MCF 10A (cell line): ENCODE measurements at regions of chr22 and their contacts with region 1.

Region 1: GRCh38 chr22:50326959-50327710 is at the start of gene DENND6B:
- DNase-seq: peak; percentile 68
- H3K4me3 Mint-ChIP-seq: peak within 1 kb of the TSS; percentile 84
- H3K27ac Mint-ChIP-seq: peak within 1 kb of the TSS; percentile 49
- H3K4me1 Mint-ChIP-seq: peaks cover 18% of the 10 kb centered on the region
- H3K27me3 Mint-ChIP-seq: no peaks in the 10 kb centered on the region
- CTCF ChIP-seq: peak; percentile 42
- total RNA-seq, gene DENND6B: 4.0 and 5.5 TPM in 2 replicates

Region 2: GRCh38 chr22:49880281-49880680 is 446.9 kb before region 1 on chr22:
- CTCF ChIA-PET with region 1: no interaction called
- POLR2A ChIA-PET with region 1: no interaction called
- intact Hi-C with region 1: no loop called
- DNase-seq: no peak
- H3K4me3 Mint-ChIP-seq: no peak overlapping the region
- H3K27ac Mint-ChIP-seq: peak overlapping the region; percentile 46
- H3K4me1 Mint-ChIP-seq: no peaks in the 10 kb centered on the region
- H3K27me3 Mint-ChIP-seq: no peaks in the 10 kb centered on the region
- CTCF ChIP-seq: no peak

Region 3: DNA sequence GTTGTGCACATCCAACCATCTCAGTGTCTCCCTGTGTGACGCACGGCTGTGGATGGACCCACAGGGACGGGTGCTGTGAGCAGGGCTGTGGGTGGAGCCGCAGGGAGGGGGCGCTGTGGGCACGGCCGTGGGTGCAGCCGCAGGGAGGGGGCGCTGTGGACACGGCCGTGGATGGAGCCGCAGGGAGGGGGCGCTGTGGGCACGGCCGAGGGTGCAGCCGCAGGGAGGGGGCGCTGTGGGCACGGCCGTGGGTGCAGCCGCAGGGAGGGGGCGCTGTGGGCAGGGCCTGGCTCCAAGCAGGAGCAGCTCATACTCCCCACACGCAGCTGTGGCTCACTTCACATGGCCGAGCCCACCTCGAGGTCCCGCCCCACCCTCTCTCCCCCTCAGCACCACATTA is 51.0 kb before region 1 on chr22:
- CTCF ChIA-PET with region 1: interaction called, 38 read pairs
- POLR2A ChIA-PET with region 1: interaction called, 3 read pairs
- intact Hi-C with region 1: loop called (anchors 2 kb)
- DNase-seq: no peak
- H3K4me3 Mint-ChIP-seq: no peak overlapping the region
- H3K27ac Mint-ChIP-seq: no peak overlapping the region
- H3K4me1 Mint-ChIP-seq: peaks cover 6% of the 10 kb centered on the region
- H3K27me3 Mint-ChIP-seq: no peaks in the 10 kb centered on the region
- CTCF ChIP-seq: peak; percentile 64

Region 4: DNA sequence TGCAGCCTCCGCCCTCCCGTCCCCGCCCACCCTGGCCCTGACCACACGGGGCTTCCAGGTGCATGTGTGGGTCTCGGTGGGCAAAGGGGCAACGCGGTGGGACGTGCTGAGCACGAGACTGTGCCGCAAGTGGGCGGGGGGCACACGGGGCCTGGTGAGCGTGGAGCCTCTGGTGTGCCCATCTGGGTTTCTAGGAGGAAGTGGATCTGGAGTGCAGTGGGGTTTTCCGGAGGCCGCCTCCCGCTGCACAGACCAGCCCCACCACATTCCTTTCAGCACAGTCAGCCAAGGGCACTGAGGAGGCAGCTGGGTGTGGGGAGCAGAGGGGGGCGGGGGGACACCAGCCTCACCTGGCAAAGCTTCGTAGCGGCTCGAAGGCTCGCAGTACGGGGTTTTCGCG is 44.8 kb before region 1 on chr22:
- CTCF ChIA-PET with region 1: interaction called, 3 read pairs
- POLR2A ChIA-PET with region 1: interaction called, 3 read pairs
- intact Hi-C with region 1: loop called (anchors 2 kb)
- DNase-seq: peak; percentile 84
- H3K4me3 Mint-ChIP-seq: peak overlapping the region; percentile 44
- H3K27ac Mint-ChIP-seq: no peak overlapping the region
- H3K4me1 Mint-ChIP-seq: peaks cover 4% of the 10 kb centered on the region
- H3K27me3 Mint-ChIP-seq: no peaks in the 10 kb centered on the region
- CTCF ChIP-seq: no peak